ENCODE measurements at regions of chr21 and their contacts with region 1.

Region 1: DNA sequence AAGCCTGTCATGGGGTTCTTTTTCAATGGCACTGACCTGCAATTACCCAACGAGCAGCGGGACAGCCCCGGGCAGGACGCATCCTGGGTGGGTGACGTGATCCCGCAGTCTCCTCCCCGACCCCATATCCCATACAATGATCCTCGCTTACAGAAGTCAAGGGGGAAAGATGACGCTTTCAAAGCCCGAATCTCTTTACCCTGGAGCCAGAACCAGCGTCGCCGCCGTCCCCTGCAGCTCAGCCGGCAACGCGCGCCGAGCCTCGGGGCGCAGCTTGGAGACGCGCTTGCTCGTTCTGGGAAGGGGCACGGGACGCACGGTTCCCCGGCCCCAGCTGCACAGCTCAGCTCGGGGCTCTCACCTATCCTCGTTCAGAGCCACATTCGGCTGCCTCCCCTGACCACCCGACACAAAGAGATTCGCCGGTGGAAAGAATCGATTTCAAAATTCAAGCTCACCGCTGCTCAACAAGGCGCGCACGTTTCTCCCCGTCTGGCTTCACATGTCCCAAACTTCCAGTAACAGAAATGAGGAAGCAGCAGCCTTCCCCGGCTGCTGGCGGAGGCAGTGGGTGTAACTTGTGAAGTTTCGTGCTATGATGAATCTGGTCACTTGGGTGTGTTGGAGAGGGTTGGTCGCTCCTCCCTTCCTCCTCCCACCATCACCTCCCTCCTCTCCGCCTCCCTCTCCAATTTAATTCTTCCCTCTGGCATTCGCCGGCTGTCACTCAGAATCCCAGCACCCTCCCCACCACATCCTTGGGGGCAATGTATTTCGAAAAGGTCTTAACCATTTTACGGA is at the start of gene TIAM1:
- DNase-seq: peak; percentile 86
- H3K4me3 Mint-ChIP-seq: peak within 1 kb of the TSS; percentile 96
- H3K27ac Mint-ChIP-seq: peak within 1 kb of the TSS; percentile 92
- H3K4me1 Mint-ChIP-seq: peaks cover 21% of the 10 kb centered on the region
- H3K27me3 Mint-ChIP-seq: no peaks in the 10 kb centered on the region
- CTCF ChIP-seq: no peak
- total RNA-seq, gene TIAM1: 9.0 and 9.8 TPM in 2 replicates

Region 2: DNA sequence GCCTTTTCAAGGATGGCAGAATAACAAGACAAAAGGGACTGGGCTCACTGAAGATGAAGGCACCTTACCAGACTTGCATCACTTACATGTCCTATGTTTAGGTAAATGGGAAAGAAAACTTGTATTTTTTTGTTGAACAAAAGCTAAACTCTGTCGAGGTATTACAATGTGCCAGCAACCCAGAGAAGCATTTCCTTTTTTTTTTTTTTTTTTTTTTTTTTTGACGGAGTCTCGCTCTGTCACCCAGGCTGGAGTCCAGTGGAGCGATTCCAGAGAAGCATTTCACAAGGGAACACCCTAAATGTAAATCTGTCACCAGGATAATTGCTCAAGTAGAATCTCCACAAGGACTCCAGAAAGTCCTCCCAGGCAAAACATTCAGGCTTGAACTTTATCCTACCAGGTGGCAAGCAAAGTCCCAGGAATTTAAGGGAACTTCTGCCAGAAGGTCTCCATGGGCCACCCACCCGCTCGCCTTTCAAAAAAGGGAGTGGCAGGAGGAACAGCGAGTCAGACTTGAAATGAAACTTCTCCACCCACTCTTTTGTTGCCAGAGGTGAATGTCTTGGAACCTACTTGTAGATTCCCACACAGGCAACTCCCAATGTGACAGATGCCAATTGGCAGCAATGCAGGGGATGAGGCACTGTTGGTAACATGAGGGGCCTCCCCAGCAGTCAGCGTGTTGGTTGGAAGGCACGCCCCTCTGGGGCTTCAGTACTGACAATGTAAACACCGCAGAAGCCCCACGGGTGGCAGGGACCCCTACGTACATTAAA is 124.9 kb before region 1 on chr21:
- CTCF ChIA-PET with region 1: interaction called, 6 read pairs
- POLR2A ChIA-PET with region 1: interaction called, 5 read pairs
- intact Hi-C with region 1: loop called (anchors 2 kb)
- DNase-seq: peak; percentile 94
- H3K4me3 Mint-ChIP-seq: peak overlapping the region; percentile 51
- H3K27ac Mint-ChIP-seq: peak overlapping the region; percentile 74
- H3K4me1 Mint-ChIP-seq: peaks cover 22% of the 10 kb centered on the region
- H3K27me3 Mint-ChIP-seq: no peaks in the 10 kb centered on the region
- CTCF ChIP-seq: no peak

Region 3: GRCh38 chr21:31282095-31282709 is 61.7 kb before region 1 on chr21:
- CTCF ChIA-PET with region 1: no interaction called
- POLR2A ChIA-PET with region 1: no interaction called
- intact Hi-C with region 1: loop called (anchors 5 kb)
- DNase-seq: peak; percentile 69
- H3K4me3 Mint-ChIP-seq: peak overlapping the region; percentile 69
- H3K27ac Mint-ChIP-seq: peak overlapping the region; percentile 93
- H3K4me1 Mint-ChIP-seq: peaks cover 18% of the 10 kb centered on the region
- H3K27me3 Mint-ChIP-seq: no peaks in the 10 kb centered on the region
- CTCF ChIP-seq: no peak

Region 4: GRCh38 chr21:31354604-31355443 is 10.9 kb after region 1 on chr21:
- CTCF ChIA-PET with region 1: interaction called, 6 read pairs
- POLR2A ChIA-PET with region 1: interaction called, 21 read pairs
- intact Hi-C with region 1: no loop called
- DNase-seq: peak; percentile 97
- H3K4me3 Mint-ChIP-seq: peak overlapping the region; percentile 28
- H3K27ac Mint-ChIP-seq: peak overlapping the region; percentile 86
- H3K4me1 Mint-ChIP-seq: peaks cover 29% of the 10 kb centered on the region
- H3K27me3 Mint-ChIP-seq: no peaks in the 10 kb centered on the region
- CTCF ChIP-seq: no peak

Region 5: GRCh38 chr21:31457675-31458074 is 113.8 kb after region 1 on chr21:
- CTCF ChIA-PET with region 1: no interaction called
- POLR2A ChIA-PET with region 1: no interaction called
- intact Hi-C with region 1: loop called (anchors 2 kb)
- DNase-seq: peak; percentile 25
- H3K4me3 Mint-ChIP-seq: no peak overlapping the region
- H3K27ac Mint-ChIP-seq: no peak overlapping the region
- H3K4me1 Mint-ChIP-seq: no peaks in the 10 kb centered on the region
- H3K27me3 Mint-ChIP-seq: no peaks in the 10 kb centered on the region
- CTCF ChIP-seq: peak; percentile 15

Region 6: GRCh38 chr21:31558962-31559367 is 215.1 kb after region 1 on chr21:
- CTCF ChIA-PET with region 1: interaction called, 4 read pairs
- POLR2A ChIA-PET with region 1: interaction called, 3 read pairs
- intact Hi-C with region 1: loop called (anchors 5 kb)
- DNase-seq: peak; percentile 93
- H3K4me3 Mint-ChIP-seq: peak overlapping the region; percentile 78
- H3K27ac Mint-ChIP-seq: no peak overlapping the region
- H3K4me1 Mint-ChIP-seq: peaks cover 5% of the 10 kb centered on the region
- H3K27me3 Mint-ChIP-seq: no peaks in the 10 kb centered on the region
- CTCF ChIP-seq: peak; percentile 34

Measured in MCF 10A (cell line).